GM23248 (cell line): ENCODE measurements at regions of chr15 and their contacts with region 1.

Region 1: DNA sequence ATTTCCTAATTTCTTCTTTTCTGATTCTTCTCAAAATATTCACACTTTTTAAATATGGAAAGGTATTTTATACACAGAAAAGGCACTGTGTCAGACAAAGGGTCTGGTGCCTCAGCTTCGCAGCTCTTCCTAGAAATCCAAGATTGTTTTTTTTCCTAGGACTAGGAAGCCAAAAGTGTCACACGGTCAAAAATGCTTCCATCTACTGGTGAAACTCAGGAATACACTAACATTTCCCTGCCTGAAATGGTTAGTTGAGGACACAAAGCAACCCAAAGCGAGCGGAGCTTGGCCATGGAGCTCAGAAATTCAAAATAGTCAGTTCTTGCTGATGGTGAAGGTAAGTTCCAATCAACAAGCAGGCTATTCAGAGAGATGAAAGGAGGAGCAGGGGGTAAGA is 426.5 kb upstream of the RASGRP1 start:
- DNase-seq: peak; percentile 64
- H3K4me3 ChIP-seq: no peak overlapping the region
- H3K27ac ChIP-seq: peak overlapping the region; percentile 41
- H3K4me1 ChIP-seq: peaks cover 54% of the 10 kb centered on the region
- H3K27me3 ChIP-seq: no peaks in the 10 kb centered on the region

Region 2: GRCh38 chr15:38714309-38715072 is 276.6 kb before region 1 on chr15:
- in situ Hi-C with region 1: loop called (anchors 10 kb)
- DNase-seq: peak; percentile 96
- H3K4me3 ChIP-seq: no peak overlapping the region
- H3K27ac ChIP-seq: peak overlapping the region; percentile 96
- H3K4me1 ChIP-seq: peaks cover 30% of the 10 kb centered on the region
- H3K27me3 ChIP-seq: no peaks in the 10 kb centered on the region

Region 3: GRCh38 chr15:38761681-38762080 is 229.4 kb before region 1 on chr15:
- in situ Hi-C with region 1: no loop called
- DNase-seq: no peak
- H3K4me3 ChIP-seq: no peak overlapping the region
- H3K27ac ChIP-seq: no peak overlapping the region
- H3K4me1 ChIP-seq: peaks cover 38% of the 10 kb centered on the region
- H3K27me3 ChIP-seq: no peaks in the 10 kb centered on the region

Region 4: GRCh38 chr15:39358441-39359041 is 367.4 kb after region 1 on chr15:
- in situ Hi-C with region 1: no loop called
- DNase-seq: peak; percentile 69
- H3K4me3 ChIP-seq: 0 out of 2 replicates have a peak overlapping the region, but pooled peaks have one; percentile 5
- H3K27ac ChIP-seq: peak overlapping the region; percentile 85
- H3K4me1 ChIP-seq: peaks cover 63% of the 10 kb centered on the region
- H3K27me3 ChIP-seq: no peaks in the 10 kb centered on the region